ENCODE measurements at regions of chr22 and their contacts with region 1.

Region 1: DNA sequence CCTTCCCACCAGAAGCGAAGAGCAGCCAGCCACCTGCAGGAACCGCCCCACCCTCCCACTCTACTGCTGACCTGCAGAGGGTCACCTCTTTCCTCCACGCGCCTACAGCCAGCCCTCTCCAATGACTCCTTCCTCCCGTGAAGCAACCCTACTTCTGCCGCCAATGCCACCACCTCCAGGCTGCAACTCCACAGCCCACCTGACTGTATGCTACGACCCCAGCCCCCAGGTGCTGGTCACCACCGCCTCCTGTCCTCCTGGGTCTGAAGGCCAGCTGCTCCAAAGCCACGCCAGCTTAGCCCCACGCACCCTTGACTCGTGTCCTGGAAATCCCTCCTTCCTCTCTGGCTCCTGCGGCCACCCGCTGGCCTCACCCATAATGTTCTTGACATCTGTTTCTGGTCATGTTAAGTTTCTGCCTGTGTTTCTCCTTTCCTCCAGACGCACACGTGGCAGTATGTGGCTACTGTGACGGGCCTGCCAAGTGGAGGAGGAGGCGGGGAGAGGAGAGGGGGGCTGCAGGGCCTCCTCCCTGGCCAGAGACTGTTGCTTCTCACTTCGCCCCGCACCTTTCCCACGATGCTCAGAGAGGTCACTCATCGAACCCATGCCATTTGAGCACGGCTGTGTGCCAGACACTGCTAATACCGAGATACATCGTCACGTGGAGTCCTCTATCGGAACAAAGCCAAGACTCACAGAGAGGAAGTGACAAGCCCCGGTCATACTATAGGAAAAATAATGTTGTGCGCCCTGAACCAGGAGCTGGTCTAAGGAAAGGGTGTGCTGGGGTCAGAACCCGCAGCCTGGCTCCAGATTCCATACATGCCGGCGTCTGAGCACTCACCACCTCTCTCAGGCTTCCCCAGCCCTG is 11.6 kb downstream of the C1QTNF6 start:
- DNase-seq: peak; percentile 24
- H3K4me3 ChIP-seq: no peak overlapping the region
- CTCF ChIP-seq: no peak

Region 2: GRCh38 chr22:37260901-37261336 is 84.5 kb after region 1 on chr22:
- in situ Hi-C with region 1: loop called (anchors 5 kb)
- DNase-seq: no peak
- H3K4me3 ChIP-seq: no peak overlapping the region
- CTCF ChIP-seq: peak; percentile 97